ENCODE measurements at regions of chr22 and their contacts with region 1.

Region 1: DNA sequence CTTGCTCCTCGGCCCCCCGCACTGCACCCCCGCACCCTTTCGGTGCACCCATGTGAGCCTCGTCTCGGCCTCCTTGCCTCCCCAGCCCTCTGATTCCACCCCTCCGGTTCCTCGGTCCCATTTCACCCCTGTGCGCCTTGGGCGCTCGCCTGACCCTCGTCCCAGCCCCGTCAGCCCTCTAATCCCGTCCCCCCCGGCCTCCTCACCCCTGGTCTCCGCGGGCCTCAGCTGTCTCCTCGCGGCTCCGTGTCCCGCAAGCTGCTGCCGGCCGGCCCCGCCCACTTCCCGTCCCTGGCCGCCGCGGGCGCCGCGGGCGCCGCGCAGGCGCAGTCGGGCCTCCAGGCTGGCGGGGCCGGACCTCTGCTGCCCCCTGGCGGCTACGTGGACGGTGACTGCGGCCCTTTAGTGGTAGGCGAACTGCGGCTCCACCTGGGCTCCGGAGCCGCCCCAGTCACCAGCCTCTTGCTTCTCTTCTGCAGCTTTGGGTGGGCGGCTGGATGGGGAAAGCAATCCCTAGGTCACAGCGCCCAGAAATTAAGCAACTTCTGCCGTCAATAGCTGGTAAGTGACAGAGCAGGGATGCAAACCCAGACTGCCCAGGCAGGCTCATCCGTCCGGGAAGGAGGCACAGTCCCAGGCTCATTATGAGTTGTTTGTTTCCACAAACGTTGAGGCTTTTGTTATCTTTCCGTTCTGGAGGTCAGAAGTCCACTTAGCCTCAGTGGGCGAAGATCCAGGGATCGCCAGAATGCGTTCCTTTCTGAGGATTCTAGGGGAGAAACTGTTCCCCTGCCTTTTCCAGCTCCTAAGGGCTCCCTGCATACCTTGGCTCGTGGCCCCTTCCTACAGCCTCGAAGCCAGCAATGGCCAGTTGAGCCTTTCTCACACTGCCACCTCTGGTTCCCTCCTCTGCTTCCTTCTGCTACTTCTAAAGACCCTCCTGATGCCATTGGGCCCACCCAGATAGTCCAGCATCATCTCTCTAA is at the start of gene PPM1F:
- DNase-seq: peak; percentile 99
- H3K4me3 ChIP-seq: peak within 1 kb of the TSS; percentile 67 to 69
- H3K27ac ChIP-seq: peak within 1 kb of the TSS in 1 of 2 experiments; percentile 79; a peak in 2 of 4 replicates
- H3K4me1 ChIP-seq: peaks cover 2 to 22% of the 10 kb centered on the region in 2 experiments; a peak in 2 of 4 replicates
- H3K27me3 ChIP-seq: no peaks in the 10 kb centered on the region
- CTCF ChIP-seq: peak; percentile 79
- EP300 ChIP-seq: no peak
- RAD21 ChIP-seq: peak; percentile 64
- polyA plus RNA-seq, gene PPM1F: 29.6 and 33.8 TPM in 2 replicates

Region 2: DNA sequence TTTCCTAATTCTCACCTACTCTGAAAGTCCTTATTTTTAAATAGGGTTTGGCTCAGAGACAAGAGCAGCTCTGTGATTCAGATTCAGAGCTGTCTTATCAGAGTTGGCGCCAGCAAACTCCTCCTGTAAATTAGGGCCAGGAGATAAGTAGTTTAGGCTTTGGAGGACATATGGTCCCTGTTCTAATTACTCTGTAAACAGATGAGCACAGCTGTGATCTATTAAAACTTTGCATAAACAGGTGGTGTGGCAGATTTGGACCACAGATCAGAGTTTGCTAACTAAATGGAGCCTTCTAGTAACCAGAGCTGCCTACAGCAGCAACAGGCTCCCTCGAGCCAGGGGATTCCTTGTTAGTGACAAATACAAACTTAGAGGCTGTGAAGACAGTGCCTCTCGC is 245.2 kb before region 1 on chr22:
- CTCF ChIA-PET with region 1: interaction called, 14 read pairs
- POLR2A ChIA-PET with region 1: no interaction called
- DNase-seq: peak; percentile 54
- H3K4me3 ChIP-seq: no peak overlapping the region
- H3K27ac ChIP-seq: peak overlapping the region in 1 of 2 experiments; percentile 54; a peak in 2 of 4 replicates
- H3K4me1 ChIP-seq: peaks cover 0 to 11% of the 10 kb centered on the region in 2 experiments; a peak in 1 of 4 replicates
- H3K27me3 ChIP-seq: no peaks in the 10 kb centered on the region
- CTCF ChIP-seq: no peak
- EP300 ChIP-seq: peak in 1 of 2 experiments; percentile 60; a peak in 1 of 4 replicates
- RAD21 ChIP-seq: no peak

Region 3: DNA sequence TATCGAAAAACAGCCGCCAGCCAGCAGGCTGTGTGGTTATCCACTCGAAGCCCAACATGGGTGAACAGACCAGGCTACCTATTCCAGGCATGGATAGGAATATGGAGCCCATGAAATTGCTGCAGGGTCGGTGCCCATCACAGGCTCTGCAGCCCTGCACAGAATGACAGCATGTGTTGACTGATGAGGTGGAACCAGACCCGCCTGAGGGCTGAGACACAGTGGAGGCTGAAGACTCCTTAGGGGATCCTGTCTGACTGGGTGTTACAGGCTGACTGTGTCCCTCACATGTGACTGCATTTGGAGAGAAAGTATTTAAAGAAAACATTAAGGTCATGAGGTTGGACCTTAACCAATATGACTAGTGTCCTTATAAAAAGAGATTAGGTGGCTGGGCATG is 211.1 kb before region 1 on chr22:
- CTCF ChIA-PET with region 1: no interaction called
- POLR2A ChIA-PET with region 1: no interaction called
- DNase-seq: no peak
- H3K4me3 ChIP-seq: no peak overlapping the region
- H3K27ac ChIP-seq: no peak overlapping the region
- H3K4me1 ChIP-seq: no peaks in the 10 kb centered on the region
- H3K27me3 ChIP-seq: no peaks in the 10 kb centered on the region
- CTCF ChIP-seq: no peak
- EP300 ChIP-seq: no peak
- RAD21 ChIP-seq: no peak

Region 4: GRCh38 chr22:21931056-21931455 is 21.8 kb before region 1 on chr22:
- CTCF ChIA-PET with region 1: interaction called, 173 read pairs
- POLR2A ChIA-PET with region 1: no interaction called
- DNase-seq: no peak
- H3K4me3 ChIP-seq: no peak overlapping the region
- H3K27ac ChIP-seq: no peak overlapping the region
- H3K4me1 ChIP-seq: peaks cover 0 to 5% of the 10 kb centered on the region in 2 experiments; a peak in 1 of 4 replicates
- H3K27me3 ChIP-seq: no peaks in the 10 kb centered on the region
- CTCF ChIP-seq: no peak
- EP300 ChIP-seq: no peak
- RAD21 ChIP-seq: no peak

Region 5: GRCh38 chr22:21972293-21972779 is 19.5 kb after region 1 on chr22:
- CTCF ChIA-PET with region 1: interaction called, 36 read pairs
- POLR2A ChIA-PET with region 1: no interaction called
- DNase-seq: peak; percentile 88
- H3K4me3 ChIP-seq: peak overlapping the region in 1 of 2 experiments; percentile 42; a peak in 1 of 4 replicates
- H3K27ac ChIP-seq: no peak overlapping the region
- H3K4me1 ChIP-seq: no peaks in the 10 kb centered on the region
- H3K27me3 ChIP-seq: no peaks in the 10 kb centered on the region
- CTCF ChIP-seq: peak; percentile 92
- EP300 ChIP-seq: no peak
- RAD21 ChIP-seq: peak; percentile 45

Region 6: DNA sequence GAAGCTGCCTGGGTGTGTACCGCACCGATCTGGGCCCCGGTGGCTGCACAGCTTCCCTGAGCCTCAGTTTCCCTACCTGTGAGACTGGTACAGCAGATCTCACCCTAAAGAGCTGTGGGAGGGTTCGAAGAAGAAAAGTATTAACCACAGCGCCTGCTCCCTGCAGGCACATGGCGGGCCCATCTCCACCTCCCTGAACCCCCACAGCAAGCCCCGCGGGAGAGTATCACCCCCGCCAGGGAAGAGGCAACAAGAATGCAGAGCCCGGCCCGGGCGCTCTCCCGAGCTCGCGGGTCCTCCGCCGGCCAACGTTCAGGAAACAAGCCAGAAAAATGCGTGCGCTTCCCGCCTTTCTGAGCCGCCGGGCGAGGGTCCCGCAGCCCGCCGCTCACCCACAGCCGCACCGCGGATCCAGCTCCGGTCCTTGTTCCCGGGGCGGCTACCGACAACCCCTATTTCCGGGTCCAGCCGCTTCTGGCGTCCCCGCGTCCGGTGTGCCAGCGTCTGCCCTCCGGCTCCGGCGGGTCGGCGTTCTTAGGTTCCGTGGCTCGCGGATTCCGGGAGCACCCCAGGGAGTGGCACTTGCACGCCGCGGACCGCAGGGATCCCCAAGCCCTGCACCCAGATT is 29.6 kb after region 1 on chr22 and contains the start of gene TOP3B:
- CTCF ChIA-PET with region 1: interaction called, 12 read pairs
- POLR2A ChIA-PET with region 1: no interaction called
- DNase-seq: peak; percentile 92
- H3K4me3 ChIP-seq: peak within 1 kb of the TSS; percentile 70 to 99
- H3K27ac ChIP-seq: peak within 1 kb of the TSS in 1 of 2 experiments; percentile 56; a peak in 1 of 4 replicates
- H3K4me1 ChIP-seq: peaks cover 7 to 8% of the 10 kb centered on the region in 2 experiments; a peak in 1 of 4 replicates
- H3K27me3 ChIP-seq: no peaks in the 10 kb centered on the region
- CTCF ChIP-seq: no peak
- EP300 ChIP-seq: peak in 1 of 2 experiments; percentile 36; a peak in 1 of 4 replicates
- RAD21 ChIP-seq: no peak
- polyA plus RNA-seq, gene TOP3B: 14.4 and 17.4 TPM in 2 replicates

Region 7: DNA sequence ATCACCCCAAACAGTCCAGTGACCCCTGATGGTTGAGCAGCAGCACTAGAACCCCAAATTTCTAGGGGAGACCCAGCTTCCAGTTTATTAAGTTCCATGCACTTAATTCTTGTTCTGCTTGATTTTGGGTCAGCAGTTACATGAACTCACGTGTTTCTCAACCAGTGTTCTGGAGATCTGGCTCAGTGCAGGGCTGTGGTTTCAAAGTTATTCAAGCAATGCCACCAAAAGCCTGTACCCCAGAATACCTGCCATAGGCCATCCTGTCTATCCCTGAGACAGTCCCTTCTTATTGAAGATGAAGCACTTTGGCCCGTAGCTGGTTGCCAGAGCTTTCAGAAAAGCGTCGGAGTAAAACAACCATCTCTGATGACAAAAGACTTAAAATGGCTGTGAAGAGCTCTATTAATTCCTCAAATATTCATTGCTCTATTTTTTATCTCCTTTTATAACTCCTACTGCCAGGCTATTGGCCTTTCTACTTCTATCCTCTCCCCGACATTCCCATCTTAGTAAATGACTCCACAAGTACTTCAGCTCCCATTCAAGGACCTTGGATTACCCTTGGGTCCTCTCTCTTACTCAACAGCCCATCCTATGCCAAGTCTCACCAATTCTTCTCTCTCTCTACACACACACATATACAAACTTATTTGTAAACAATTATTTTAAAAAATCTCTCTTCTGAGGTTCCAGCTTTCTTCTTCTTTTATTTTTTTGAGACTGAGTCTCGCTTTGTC is 273.7 kb after region 1 on chr22:
- CTCF ChIA-PET with region 1: no interaction called
- POLR2A ChIA-PET with region 1: no interaction called
- DNase-seq: no peak
- H3K4me3 ChIP-seq: no peak overlapping the region
- H3K27ac ChIP-seq: no peak overlapping the region
- H3K4me1 ChIP-seq: no peaks in the 10 kb centered on the region
- H3K27me3 ChIP-seq: peaks cover 29% of the 10 kb centered on the region; the same call in 1 of the 2 replicates
- CTCF ChIP-seq: no peak
- EP300 ChIP-seq: no peak
- RAD21 ChIP-seq: no peak

Measured in SK-N-SH (cell line).